HepG2 (cell line): ENCODE measurements at regions of chr18 and their contacts with region 1.

Region 1: GRCh38 chr18:13629841-13630715 is 96.3 kb downstream of the FAM210A start:
- DNase-seq: peak; percentile 67
- ATAC-seq: peak; percentile 95
- H3K4me3 ChIP-seq: no peak overlapping the region
- H3K27ac ChIP-seq: no peak overlapping the region
- H3K4me1 ChIP-seq: peaks cover 5% of the 10 kb centered on the region
- H3K27me3 ChIP-seq: no peaks in the 10 kb centered on the region
- CTCF ChIP-seq: peak; percentile 86
- EP300 ChIP-seq: no peak
- POLR2A ChIP-seq: no peak
- RAD21 ChIP-seq: peak; percentile 77

Region 2: DNA sequence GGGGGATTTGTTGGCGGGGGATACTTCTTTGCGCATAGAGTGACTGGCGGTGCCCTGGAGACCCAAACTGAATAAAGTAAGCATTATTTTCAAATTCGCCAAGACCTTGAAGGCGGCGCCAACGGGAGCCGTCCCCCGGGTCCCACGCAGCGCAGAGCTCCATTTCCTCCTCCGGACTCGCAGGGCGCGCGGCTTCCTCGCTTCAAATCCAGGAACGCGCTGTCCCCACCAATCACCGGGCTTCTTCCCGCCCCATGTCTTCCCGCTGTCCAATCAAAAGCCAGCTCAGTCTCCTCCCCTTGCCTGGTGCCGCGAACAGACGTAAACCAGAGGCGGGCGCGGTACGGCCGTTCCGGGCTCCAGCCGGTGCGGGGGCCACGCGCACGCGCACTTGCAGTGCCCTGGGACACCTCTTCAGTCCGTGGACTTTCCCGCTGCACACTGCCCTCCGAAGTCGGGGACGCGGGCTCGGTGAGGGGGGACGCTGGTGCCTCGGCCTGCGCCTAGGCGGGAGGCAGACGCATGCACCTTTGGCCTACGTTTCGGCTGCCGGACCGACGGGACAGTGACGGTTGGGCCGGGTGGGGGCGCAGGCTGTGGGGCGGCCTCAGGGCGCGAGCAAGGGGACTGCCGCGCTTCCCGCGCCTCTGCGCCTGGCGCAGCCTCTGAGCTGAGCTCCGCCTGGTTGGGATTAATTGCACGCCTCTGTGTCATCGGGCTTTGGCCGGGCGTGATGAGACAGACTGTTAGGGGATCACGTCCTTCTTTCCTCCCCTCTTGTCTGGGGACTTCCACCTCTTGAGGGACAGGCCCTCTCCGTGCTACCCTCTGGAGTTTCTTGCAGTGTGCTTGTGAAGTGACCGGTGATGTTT is 638.9 kb before region 1 on chr18 and contains the start of gene CEP192:
- CTCF ChIA-PET with region 1: no interaction called
- POLR2A ChIA-PET with region 1: no interaction called
- in situ Hi-C with region 1: no loop called
- intact Hi-C with region 1: loop called (anchors 5 kb)
- DNase-seq: peak; percentile 96
- ATAC-seq: peak; percentile 93
- H3K4me3 ChIP-seq: peak within 1 kb of the TSS; percentile 87 to 96 (median 91)
- H3K27ac ChIP-seq: peak within 1 kb of the TSS; percentile 86
- H3K4me1 ChIP-seq: peaks cover 49% of the 10 kb centered on the region
- H3K27me3 ChIP-seq: no peaks in the 10 kb centered on the region; a peak in 2 of 5 replicates
- CTCF ChIP-seq: peak; percentile 68
- EP300 ChIP-seq: no peak
- POLR2A ChIP-seq: peak; percentile 85 to 96
- RAD21 ChIP-seq: peak; percentile 59; the same call in 1 of the 2 replicates
- total RNA-seq, gene CEP192: 24.7 and 33.6 TPM in 2 replicates

Region 3: DNA sequence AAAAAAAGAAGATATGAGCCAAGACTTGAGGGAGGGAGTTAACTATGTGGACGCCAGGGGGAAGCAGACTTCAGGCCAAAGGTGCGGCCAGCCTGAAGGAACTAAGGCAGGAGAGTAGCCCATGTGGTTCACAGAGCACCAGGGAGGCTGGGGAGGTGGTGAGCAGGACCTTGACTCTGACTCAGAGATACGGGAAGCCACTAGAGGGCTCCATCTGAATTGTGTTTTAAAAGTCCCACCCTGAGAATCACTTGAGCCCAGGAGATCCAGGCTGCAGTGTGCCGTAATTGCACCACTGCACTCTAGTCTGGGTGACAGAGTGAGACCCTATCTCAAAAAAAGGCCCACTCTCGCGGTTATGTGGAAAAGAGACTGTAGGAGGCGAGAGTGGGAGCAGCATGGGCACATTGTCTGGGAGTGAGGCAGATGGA is 626.6 kb before region 1 on chr18:
- CTCF ChIA-PET with region 1: interaction called, 4 read pairs
- POLR2A ChIA-PET with region 1: no interaction called
- in situ Hi-C with region 1: loop called (anchors 25 kb)
- intact Hi-C with region 1: no loop called
- DNase-seq: peak; percentile 47
- ATAC-seq: peak; percentile 98
- H3K4me3 ChIP-seq: no peak overlapping the region
- H3K27ac ChIP-seq: no peak overlapping the region
- H3K4me1 ChIP-seq: no peaks in the 10 kb centered on the region
- H3K27me3 ChIP-seq: no peaks in the 10 kb centered on the region
- CTCF ChIP-seq: peak; percentile 68
- EP300 ChIP-seq: no peak
- POLR2A ChIP-seq: no peak
- RAD21 ChIP-seq: peak; percentile 14; the same call in 1 of the 2 replicates

Region 4: GRCh38 chr18:13112982-13113381 is 517.1 kb before region 1 on chr18:
- CTCF ChIA-PET with region 1: interaction called, 6 read pairs
- POLR2A ChIA-PET with region 1: no interaction called
- in situ Hi-C with region 1: no loop called
- intact Hi-C with region 1: loop called (anchors 1 kb)
- DNase-seq: peak; percentile 81
- ATAC-seq: peak; percentile 100
- H3K4me3 ChIP-seq: no peak overlapping the region
- H3K27ac ChIP-seq: no peak overlapping the region
- H3K4me1 ChIP-seq: peaks cover 17% of the 10 kb centered on the region; the same call in 1 of the 2 replicates
- H3K27me3 ChIP-seq: no peaks in the 10 kb centered on the region
- CTCF ChIP-seq: peak; percentile 90
- EP300 ChIP-seq: no peak
- POLR2A ChIP-seq: no peak
- RAD21 ChIP-seq: peak; percentile 81

Region 5: DNA sequence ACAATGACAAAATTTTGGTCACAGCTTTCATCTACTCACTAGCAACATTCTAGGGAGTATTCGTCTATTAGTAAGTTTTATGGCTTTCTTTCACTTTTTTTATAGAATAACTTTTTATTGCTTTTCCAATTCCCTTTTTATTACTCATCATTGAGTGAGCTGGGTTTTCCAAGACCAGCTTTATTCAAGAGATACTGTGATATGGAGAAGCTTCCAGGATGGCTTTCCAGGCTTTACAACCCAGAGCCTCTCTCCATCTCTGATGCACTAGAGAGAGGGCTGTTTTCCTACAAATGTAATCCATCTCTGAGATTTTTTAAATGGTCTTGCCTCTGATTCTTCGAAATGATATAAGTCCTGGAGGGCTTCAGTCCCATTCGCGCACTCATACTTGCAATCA is 293.2 kb before region 1 on chr18:
- CTCF ChIA-PET with region 1: no interaction called
- POLR2A ChIA-PET with region 1: no interaction called
- in situ Hi-C with region 1: no loop called
- intact Hi-C with region 1: no loop called
- DNase-seq: no peak
- ATAC-seq: no peak
- H3K4me3 ChIP-seq: no peak overlapping the region
- H3K27ac ChIP-seq: peak overlapping the region; percentile 83
- H3K4me1 ChIP-seq: peaks cover 42% of the 10 kb centered on the region
- H3K27me3 ChIP-seq: no peaks in the 10 kb centered on the region
- CTCF ChIP-seq: no peak
- EP300 ChIP-seq: no peak
- POLR2A ChIP-seq: no peak
- RAD21 ChIP-seq: no peak

Region 6: GRCh38 chr18:13558124-13558523 is 72.0 kb before region 1 on chr18:
- CTCF ChIA-PET with region 1: interaction called, 9 read pairs
- POLR2A ChIA-PET with region 1: no interaction called
- in situ Hi-C with region 1: loop called (anchors 5 kb)
- intact Hi-C with region 1: loop called (anchors 5 kb)
- DNase-seq: peak; percentile 52
- ATAC-seq: peak; percentile 93
- H3K4me3 ChIP-seq: no peak overlapping the region
- H3K27ac ChIP-seq: no peak overlapping the region
- H3K4me1 ChIP-seq: no peaks in the 10 kb centered on the region
- H3K27me3 ChIP-seq: no peaks in the 10 kb centered on the region
- CTCF ChIP-seq: peak; percentile 78
- EP300 ChIP-seq: no peak
- POLR2A ChIP-seq: no peak
- RAD21 ChIP-seq: peak; percentile 63